GM12878 (cell line): ENCODE measurements at regions of chr15 and their contacts with region 1.

Region 1: GRCh38 chr15:61834076-61834697 is 226.1 kb downstream of the VPS13C start:
- DNase-seq: no peak
- ATAC-seq: peak; percentile 88
- H3K4me3 ChIP-seq: no peak overlapping the region
- H3K27ac ChIP-seq: no peak overlapping the region
- H3K4me1 ChIP-seq: no peaks in the 10 kb centered on the region
- H3K27me3 ChIP-seq: no peaks in the 10 kb centered on the region; a peak in 2 of 4 replicates
- CTCF ChIP-seq: peak; percentile 94 to 96 (median 96)
- EP300 ChIP-seq: no peak
- POLR2A ChIP-seq: no peak
- RAD21 ChIP-seq: peak; percentile 82

Region 2: DNA sequence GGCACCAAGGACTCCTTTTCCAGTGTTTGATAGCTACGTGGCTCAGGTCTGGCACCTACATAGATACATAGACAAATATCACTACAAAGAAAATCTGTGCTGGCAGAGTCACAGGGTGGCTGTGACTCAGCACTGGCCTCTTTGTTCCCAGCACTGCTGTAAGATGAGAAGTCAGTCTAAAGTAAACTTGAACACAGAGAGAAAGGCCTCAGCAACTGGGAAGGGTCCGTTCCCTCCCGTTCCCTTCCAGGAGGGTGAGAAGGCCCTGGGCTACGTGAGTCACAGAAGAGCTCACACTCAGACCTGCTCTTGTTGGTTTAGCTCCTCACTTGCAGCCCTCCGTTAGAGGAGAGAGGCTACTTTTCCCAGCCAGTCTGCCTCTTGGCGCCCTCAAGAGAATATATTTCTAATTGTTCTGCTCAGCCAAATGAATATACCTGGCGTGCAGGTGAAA is 1459.5 kb before region 1 on chr15:
- CTCF ChIA-PET with region 1: no interaction called
- POLR2A ChIA-PET with region 1: no interaction called
- RAD21 ChIA-PET with region 1: no interaction called
- SMC1A ChIA-PET with region 1: no interaction called
- in situ Hi-C with region 1: loop called (anchors 25 kb)
- intact Hi-C with region 1: no loop called
- DNase-seq: no peak
- ATAC-seq: no peak
- H3K4me3 ChIP-seq: no peak overlapping the region
- H3K27ac ChIP-seq: no peak overlapping the region
- H3K4me1 ChIP-seq: no peaks in the 10 kb centered on the region
- H3K27me3 ChIP-seq: no peaks in the 10 kb centered on the region
- CTCF ChIP-seq: no peak
- EP300 ChIP-seq: no peak
- POLR2A ChIP-seq: no peak
- RAD21 ChIP-seq: no peak

Region 3: GRCh38 chr15:61169904-61170695 is 664.1 kb before region 1 on chr15:
- CTCF ChIA-PET with region 1: interaction called, 19 read pairs
- POLR2A ChIA-PET with region 1: no interaction called
- RAD21 ChIA-PET with region 1: interaction called, 7 read pairs
- SMC1A ChIA-PET with region 1: no interaction called
- in situ Hi-C with region 1: loop called (anchors 5 kb)
- intact Hi-C with region 1: loop called (anchors 10 kb)
- DNase-seq: peak; percentile 15
- ATAC-seq: peak; percentile 45
- H3K4me3 ChIP-seq: no peak overlapping the region
- H3K27ac ChIP-seq: no peak overlapping the region
- H3K4me1 ChIP-seq: peaks cover 10% of the 10 kb centered on the region
- H3K27me3 ChIP-seq: no peaks in the 10 kb centered on the region; a peak in 2 of 4 replicates
- CTCF ChIP-seq: 0 out of 6 replicates have a peak, but pooled peaks of 1 of the 3 experiments have one; percentile 4
- EP300 ChIP-seq: no peak
- POLR2A ChIP-seq: no peak
- RAD21 ChIP-seq: no peak

Region 4: DNA sequence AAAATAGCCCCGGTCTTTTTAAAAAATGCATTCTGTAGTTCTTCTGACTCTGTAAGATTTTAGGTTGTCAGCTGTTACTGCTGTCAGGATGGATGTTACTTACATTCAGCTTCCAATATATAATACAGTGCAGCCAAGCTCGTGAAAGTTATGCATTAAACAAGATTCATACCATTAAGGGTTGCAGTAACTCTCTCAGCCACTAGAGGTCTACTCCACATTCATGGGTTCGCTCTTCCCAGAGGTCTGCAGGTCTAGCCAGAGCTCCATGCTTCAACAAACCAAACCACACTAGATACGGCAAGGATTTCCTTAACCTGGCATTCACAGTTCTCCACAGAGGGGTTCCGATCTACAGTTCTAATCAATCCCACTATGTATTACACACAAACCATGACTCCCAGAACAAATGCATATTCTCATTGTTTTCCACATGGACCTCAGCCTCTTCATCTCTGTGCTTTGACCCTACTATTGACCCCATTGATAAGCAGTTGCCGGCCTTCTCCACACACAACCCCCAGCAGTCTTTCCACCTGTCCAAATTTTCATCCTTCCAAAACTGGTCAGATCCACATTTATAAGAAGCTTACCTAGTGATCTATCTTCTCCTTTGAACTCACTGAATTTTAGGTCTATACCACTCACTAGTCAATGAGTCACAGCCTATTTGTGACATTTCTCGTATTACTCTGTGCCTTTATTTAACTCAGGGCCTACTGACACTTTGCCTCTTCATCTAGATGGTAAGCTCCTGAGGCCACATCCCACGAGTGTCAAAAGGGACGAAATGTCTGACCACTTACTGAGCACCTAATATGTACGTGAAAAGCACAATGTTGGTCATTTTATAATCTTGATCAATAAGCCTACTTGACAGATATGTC is 638.8 kb before region 1 on chr15:
- CTCF ChIA-PET with region 1: interaction called, 59 read pairs
- POLR2A ChIA-PET with region 1: no interaction called
- RAD21 ChIA-PET with region 1: interaction called, 16 read pairs
- SMC1A ChIA-PET with region 1: interaction called, 10 read pairs
- in situ Hi-C with region 1: no loop called
- intact Hi-C with region 1: loop called (anchors 1 kb)
- DNase-seq: peak; percentile 7
- ATAC-seq: peak; percentile 81
- H3K4me3 ChIP-seq: no peak overlapping the region
- H3K27ac ChIP-seq: no peak overlapping the region
- H3K4me1 ChIP-seq: no peaks in the 10 kb centered on the region
- H3K27me3 ChIP-seq: peaks cover 5% of the 10 kb centered on the region in 2 experiments; a peak in 2 of 4 replicates
- CTCF ChIP-seq: peak; percentile 63 to 86 (median 76)
- EP300 ChIP-seq: no peak
- POLR2A ChIP-seq: no peak
- RAD21 ChIP-seq: peak; percentile 61

Region 5: GRCh38 chr15:62173215-62173614 is 339.0 kb after region 1 on chr15:
- CTCF ChIA-PET with region 1: no interaction called
- POLR2A ChIA-PET with region 1: no interaction called
- RAD21 ChIA-PET with region 1: no interaction called
- SMC1A ChIA-PET with region 1: no interaction called
- in situ Hi-C with region 1: no loop called
- intact Hi-C with region 1: no loop called
- DNase-seq: no peak
- ATAC-seq: no peak
- H3K4me3 ChIP-seq: no peak overlapping the region
- H3K27ac ChIP-seq: no peak overlapping the region
- H3K4me1 ChIP-seq: no peaks in the 10 kb centered on the region
- H3K27me3 ChIP-seq: peaks cover 0 to 3% of the 10 kb centered on the region in 2 experiments; a peak in 2 of 4 replicates
- CTCF ChIP-seq: no peak
- EP300 ChIP-seq: no peak
- POLR2A ChIP-seq: no peak
- RAD21 ChIP-seq: no peak